Calu3 (cell line): ENCODE measurements at regions of chr12 and their contacts with region 1.

Region 1: GRCh38 chr12:1117970-1118563 is 127.0 kb downstream of the ERC1 start:
- DNase-seq: peak; percentile 67
- H3K4me3 Mint-ChIP-seq: no peak overlapping the region
- H3K27ac Mint-ChIP-seq: no peak overlapping the region
- H3K4me1 Mint-ChIP-seq: peaks cover 9% of the 10 kb centered on the region
- H3K27me3 Mint-ChIP-seq: no peaks in the 10 kb centered on the region
- CTCF ChIP-seq: peak; percentile 87

Region 2: DNA sequence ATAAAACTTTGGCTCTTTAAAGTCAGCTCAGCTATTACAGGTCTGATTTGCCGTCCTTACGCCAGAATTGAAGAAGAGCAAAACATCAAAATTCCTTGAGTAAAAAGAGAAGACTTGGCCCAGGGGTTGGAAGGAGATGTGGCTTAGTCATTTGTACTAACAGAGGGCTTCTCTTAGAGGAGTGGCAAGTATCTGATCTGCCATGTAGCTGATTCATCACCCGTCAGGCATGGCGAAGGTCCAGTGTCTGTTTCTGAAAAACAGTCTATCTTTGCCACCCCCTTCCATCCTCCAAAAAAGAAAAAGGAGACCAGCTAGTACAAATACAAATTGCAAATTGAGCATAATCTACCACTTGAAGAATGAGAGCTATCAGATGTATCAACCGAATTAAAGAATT is 260.5 kb before region 1 on chr12:
- CTCF ChIA-PET with region 1: no interaction called
- intact Hi-C with region 1: no loop called
- DNase-seq: no peak
- H3K4me3 Mint-ChIP-seq: no peak overlapping the region
- H3K27ac Mint-ChIP-seq: no peak overlapping the region
- H3K4me1 Mint-ChIP-seq: no peaks in the 10 kb centered on the region
- H3K27me3 Mint-ChIP-seq: no peaks in the 10 kb centered on the region
- CTCF ChIP-seq: no peak

Region 3: DNA sequence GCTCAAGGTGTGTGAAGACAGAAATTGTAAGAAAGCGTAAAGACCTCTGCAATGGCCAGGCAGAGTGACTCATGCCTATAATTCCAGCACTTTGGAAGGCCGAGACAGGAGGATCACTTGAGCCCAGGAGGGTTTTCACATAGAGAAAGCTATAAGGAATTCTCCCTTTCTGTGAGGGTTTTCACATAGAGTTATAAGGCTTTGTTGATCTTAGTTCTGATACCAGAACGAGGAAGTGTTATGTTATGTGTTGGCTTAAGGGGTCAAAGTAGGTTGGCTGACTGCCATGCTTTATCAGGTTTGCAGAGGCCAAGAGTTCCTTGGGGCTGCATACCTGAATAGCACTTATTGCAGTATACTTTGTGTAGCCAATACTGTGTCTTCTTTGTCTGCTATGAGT is 12.1 kb after region 1 on chr12:
- CTCF ChIA-PET with region 1: interaction called, 15 read pairs
- intact Hi-C with region 1: no loop called
- DNase-seq: peak; percentile 75
- H3K4me3 Mint-ChIP-seq: peak overlapping the region; percentile 45
- H3K27ac Mint-ChIP-seq: peak overlapping the region; percentile 79
- H3K4me1 Mint-ChIP-seq: peaks cover 55% of the 10 kb centered on the region
- H3K27me3 Mint-ChIP-seq: no peaks in the 10 kb centered on the region
- CTCF ChIP-seq: no peak

Region 4: GRCh38 chr12:1279050-1279449 is 161.0 kb after region 1 on chr12:
- CTCF ChIA-PET with region 1: no interaction called
- intact Hi-C with region 1: loop called (anchors 5 kb)
- DNase-seq: no peak
- H3K4me3 Mint-ChIP-seq: no peak overlapping the region
- H3K27ac Mint-ChIP-seq: no peak overlapping the region
- H3K4me1 Mint-ChIP-seq: no peaks in the 10 kb centered on the region
- H3K27me3 Mint-ChIP-seq: no peaks in the 10 kb centered on the region
- CTCF ChIP-seq: no peak

Region 5: GRCh38 chr12:1544996-1545700 is 427.1 kb after region 1 on chr12:
- CTCF ChIA-PET with region 1: interaction called, 9 read pairs
- intact Hi-C with region 1: loop called (anchors 1 kb)
- DNase-seq: peak; percentile 18
- H3K4me3 Mint-ChIP-seq: no peak overlapping the region
- H3K27ac Mint-ChIP-seq: no peak overlapping the region
- H3K4me1 Mint-ChIP-seq: peaks cover 13% of the 10 kb centered on the region
- H3K27me3 Mint-ChIP-seq: no peaks in the 10 kb centered on the region
- CTCF ChIP-seq: peak; percentile 21

Region 6: GRCh38 chr12:1605129-1606020 is 487.3 kb after region 1 on chr12:
- CTCF ChIA-PET with region 1: interaction called, 14 read pairs
- intact Hi-C with region 1: no loop called
- DNase-seq: peak; percentile 72
- H3K4me3 Mint-ChIP-seq: peak overlapping the region; percentile 75
- H3K27ac Mint-ChIP-seq: peak overlapping the region; percentile 80
- H3K4me1 Mint-ChIP-seq: peaks cover 25% of the 10 kb centered on the region
- H3K27me3 Mint-ChIP-seq: no peaks in the 10 kb centered on the region
- CTCF ChIP-seq: peak; percentile 56